A673 (cell line): ENCODE measurements at regions of chr3 and their contacts with region 1.

Region 1: GRCh38 chr3:194682694-194683310 is 2.9 kb upstream of the FAM43A start:
- DNase-seq: peak; percentile 90
- H3K4me3 ChIP-seq: no peak overlapping the region
- H3K27ac ChIP-seq: no peak overlapping the region
- H3K4me1 ChIP-seq: peaks cover 6% of the 10 kb centered on the region
- H3K27me3 ChIP-seq: no peaks in the 10 kb centered on the region
- CTCF ChIP-seq: peak; percentile 92

Region 2: GRCh38 chr3:194671900-194672808 is 10.6 kb before region 1 on chr3 and contains the start of gene LSG1:
- CTCF ChIA-PET with region 1: interaction called, 15 read pairs
- POLR2A ChIA-PET with region 1: interaction called, 3 read pairs
- intact Hi-C with region 1: no loop called
- DNase-seq: peak; percentile 97
- H3K4me3 ChIP-seq: peak within 1 kb of the TSS; percentile 72
- H3K27ac ChIP-seq: peak within 1 kb of the TSS; percentile 99
- H3K4me1 ChIP-seq: peaks cover 17% of the 10 kb centered on the region
- H3K27me3 ChIP-seq: no peaks in the 10 kb centered on the region
- CTCF ChIP-seq: no peak
- total RNA-seq, gene LSG1: 64.0 and 81.3 TPM in 2 replicates

Region 3: GRCh38 chr3:194952841-194953241 is 270.0 kb after region 1 on chr3:
- CTCF ChIA-PET with region 1: interaction called, 3 read pairs
- POLR2A ChIA-PET with region 1: no interaction called
- intact Hi-C with region 1: loop called (anchors 5 kb)
- DNase-seq: no peak
- H3K4me3 ChIP-seq: no peak overlapping the region
- H3K27ac ChIP-seq: no peak overlapping the region
- H3K4me1 ChIP-seq: no peaks in the 10 kb centered on the region
- H3K27me3 ChIP-seq: no peaks in the 10 kb centered on the region
- CTCF ChIP-seq: no peak

Region 4: GRCh38 chr3:195040773-195041520 is 358.1 kb after region 1 on chr3:
- CTCF ChIA-PET with region 1: no interaction called
- POLR2A ChIA-PET with region 1: no interaction called
- intact Hi-C with region 1: no loop called
- DNase-seq: no peak
- H3K4me3 ChIP-seq: no peak overlapping the region
- H3K27ac ChIP-seq: no peak overlapping the region
- H3K4me1 ChIP-seq: no peaks in the 10 kb centered on the region
- H3K27me3 ChIP-seq: no peaks in the 10 kb centered on the region
- CTCF ChIP-seq: no peak

Region 5: DNA sequence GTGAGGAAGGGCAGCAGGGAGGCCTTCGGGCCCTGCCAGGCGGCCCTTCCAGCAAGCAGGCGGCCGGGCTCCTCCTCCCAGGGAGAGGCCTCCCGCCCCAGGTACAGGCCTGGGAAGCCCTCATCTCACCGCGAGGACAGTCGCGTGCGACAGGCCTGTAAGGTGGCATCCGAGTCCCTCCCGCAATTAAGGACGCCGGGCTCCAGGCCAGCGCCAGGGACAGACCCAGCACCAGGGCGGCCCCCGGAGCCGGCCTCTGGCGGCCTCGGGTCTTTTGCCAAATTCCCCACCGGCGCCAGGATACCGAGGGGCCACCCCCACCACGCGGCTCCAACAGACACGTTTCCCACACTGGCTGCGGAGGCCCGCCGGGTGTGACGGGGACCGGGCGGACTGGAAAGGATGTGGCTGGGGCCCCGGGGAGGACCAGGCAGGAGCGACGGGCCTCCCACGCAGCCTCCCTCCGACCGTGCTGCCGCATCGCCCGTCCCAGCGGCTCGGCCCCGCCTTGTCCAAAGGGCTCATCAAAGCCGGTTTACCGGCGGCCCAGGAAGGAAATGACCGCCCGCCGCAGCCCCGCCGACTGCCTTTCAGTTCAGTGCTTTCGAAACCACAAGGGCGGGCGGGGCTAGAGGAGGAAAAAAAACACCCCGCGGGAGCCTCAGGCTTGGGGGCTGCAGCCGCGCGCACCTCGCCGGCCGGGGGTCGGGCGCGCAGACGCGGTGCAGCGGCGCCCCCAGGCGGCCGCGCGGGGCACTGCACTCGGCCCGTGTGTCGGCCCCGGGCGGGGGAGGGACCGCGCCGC is 576.9 kb after region 1 on chr3:
- CTCF ChIA-PET with region 1: interaction called, 4 read pairs
- POLR2A ChIA-PET with region 1: no interaction called
- intact Hi-C with region 1: loop called (anchors 2 kb)
- DNase-seq: peak; percentile 95
- H3K4me3 ChIP-seq: peak overlapping the region; percentile 76
- H3K27ac ChIP-seq: peak overlapping the region; percentile 93
- H3K4me1 ChIP-seq: peaks cover 60% of the 10 kb centered on the region
- H3K27me3 ChIP-seq: no peaks in the 10 kb centered on the region
- CTCF ChIP-seq: peak; percentile 34; the same call in 1 of the 2 replicates

Region 6: GRCh38 chr3:195442573-195443390 is 760.0 kb after region 1 on chr3 and contains the start of gene ACAP2:
- CTCF ChIA-PET with region 1: no interaction called
- POLR2A ChIA-PET with region 1: no interaction called
- intact Hi-C with region 1: loop called (anchors 10 kb)
- DNase-seq: peak; percentile 100
- H3K4me3 ChIP-seq: peak within 1 kb of the TSS; percentile 94
- H3K27ac ChIP-seq: peak within 1 kb of the TSS; percentile 92
- H3K4me1 ChIP-seq: peaks cover 22% of the 10 kb centered on the region
- H3K27me3 ChIP-seq: no peaks in the 10 kb centered on the region
- CTCF ChIP-seq: no peak
- total RNA-seq, gene ACAP2: 45.5 and 47.4 TPM in 2 replicates